Activated naive CD4-positive, alpha-beta T cell treated with anti-CD3 and anti-CD28 coated beads for 36 hours (primary cell): ENCODE measurements at regions of chr18 and their contacts with region 1.

Region 1: DNA sequence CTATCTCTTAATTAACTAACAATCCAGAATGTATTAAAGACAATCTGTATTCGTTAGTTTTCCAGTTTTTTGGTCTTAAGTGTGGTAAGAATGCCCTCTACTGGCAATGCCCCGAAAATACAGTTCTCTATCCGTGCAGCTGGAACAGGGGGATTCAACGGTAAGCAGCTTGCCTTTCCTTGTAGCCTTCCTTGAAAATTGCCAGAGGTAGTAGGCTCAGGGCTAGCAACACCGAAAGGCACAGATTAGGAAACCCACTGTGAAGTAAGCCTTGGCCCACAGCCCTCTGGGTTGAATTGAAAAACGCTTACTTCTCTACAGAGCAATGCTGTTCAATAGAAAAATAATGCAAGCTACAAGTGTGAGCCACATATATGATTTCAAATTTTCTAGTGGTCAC is 17.1 kb upstream of the VPS4B start:
- DNase-seq: peak; percentile 60
- H3K4me3 Mint-ChIP-seq: no peak overlapping the region
- H3K27ac Mint-ChIP-seq: no peak overlapping the region
- H3K4me1 Mint-ChIP-seq: peaks cover 2% of the 10 kb centered on the region
- H3K27me3 Mint-ChIP-seq: no peaks in the 10 kb centered on the region

Region 2: GRCh38 chr18:63119647-63120046 is 319.7 kb before region 1 on chr18:
- CTCF ChIA-PET with region 1: interaction called, 7 read pairs
- intact Hi-C with region 1: loop called (anchors 1 kb)
- DNase-seq: peak; percentile 64
- H3K4me3 Mint-ChIP-seq: no peak overlapping the region
- H3K27ac Mint-ChIP-seq: no peak overlapping the region
- H3K4me1 Mint-ChIP-seq: peaks cover 2% of the 10 kb centered on the region
- H3K27me3 Mint-ChIP-seq: peaks cover 2% of the 10 kb centered on the region

Region 3: GRCh38 chr18:63131106-63131958 is 308.0 kb before region 1 on chr18:
- CTCF ChIA-PET with region 1: interaction called, 3 read pairs
- intact Hi-C with region 1: loop called (anchors 2 kb)
- DNase-seq: peak; percentile 79
- H3K4me3 Mint-ChIP-seq: no peak overlapping the region
- H3K27ac Mint-ChIP-seq: peak overlapping the region; percentile 75
- H3K4me1 Mint-ChIP-seq: peaks cover 37% of the 10 kb centered on the region
- H3K27me3 Mint-ChIP-seq: no peaks in the 10 kb centered on the region

Region 4: GRCh38 chr18:63339920-63340484 is 99.3 kb before region 1 on chr18:
- CTCF ChIA-PET with region 1: interaction called, 91 read pairs
- intact Hi-C with region 1: loop called (anchors 1 kb)
- DNase-seq: peak; percentile 65
- H3K4me3 Mint-ChIP-seq: no peak overlapping the region
- H3K27ac Mint-ChIP-seq: no peak overlapping the region
- H3K4me1 Mint-ChIP-seq: peaks cover 12% of the 10 kb centered on the region
- H3K27me3 Mint-ChIP-seq: no peaks in the 10 kb centered on the region

Region 5: GRCh38 chr18:63427558-63427957 is 11.8 kb before region 1 on chr18:
- CTCF ChIA-PET with region 1: interaction called, 19 read pairs
- intact Hi-C with region 1: no loop called
- DNase-seq: peak; percentile 49
- H3K4me3 Mint-ChIP-seq: no peak overlapping the region
- H3K27ac Mint-ChIP-seq: no peak overlapping the region
- H3K4me1 Mint-ChIP-seq: peaks cover 14% of the 10 kb centered on the region
- H3K27me3 Mint-ChIP-seq: peaks cover 8% of the 10 kb centered on the region

Region 6: GRCh38 chr18:64765908-64766307 is 1326.6 kb after region 1 on chr18:
- CTCF ChIA-PET with region 1: no interaction called
- intact Hi-C with region 1: no loop called
- DNase-seq: no peak
- H3K4me3 Mint-ChIP-seq: no peak overlapping the region
- H3K27ac Mint-ChIP-seq: no peak overlapping the region
- H3K4me1 Mint-ChIP-seq: no peaks in the 10 kb centered on the region
- H3K27me3 Mint-ChIP-seq: no peaks in the 10 kb centered on the region